Head of caudate nucleus (tissue), 42 donors: ENCODE measurements at regions of chr4 and their contacts with region 1.

Region 1: DNA sequence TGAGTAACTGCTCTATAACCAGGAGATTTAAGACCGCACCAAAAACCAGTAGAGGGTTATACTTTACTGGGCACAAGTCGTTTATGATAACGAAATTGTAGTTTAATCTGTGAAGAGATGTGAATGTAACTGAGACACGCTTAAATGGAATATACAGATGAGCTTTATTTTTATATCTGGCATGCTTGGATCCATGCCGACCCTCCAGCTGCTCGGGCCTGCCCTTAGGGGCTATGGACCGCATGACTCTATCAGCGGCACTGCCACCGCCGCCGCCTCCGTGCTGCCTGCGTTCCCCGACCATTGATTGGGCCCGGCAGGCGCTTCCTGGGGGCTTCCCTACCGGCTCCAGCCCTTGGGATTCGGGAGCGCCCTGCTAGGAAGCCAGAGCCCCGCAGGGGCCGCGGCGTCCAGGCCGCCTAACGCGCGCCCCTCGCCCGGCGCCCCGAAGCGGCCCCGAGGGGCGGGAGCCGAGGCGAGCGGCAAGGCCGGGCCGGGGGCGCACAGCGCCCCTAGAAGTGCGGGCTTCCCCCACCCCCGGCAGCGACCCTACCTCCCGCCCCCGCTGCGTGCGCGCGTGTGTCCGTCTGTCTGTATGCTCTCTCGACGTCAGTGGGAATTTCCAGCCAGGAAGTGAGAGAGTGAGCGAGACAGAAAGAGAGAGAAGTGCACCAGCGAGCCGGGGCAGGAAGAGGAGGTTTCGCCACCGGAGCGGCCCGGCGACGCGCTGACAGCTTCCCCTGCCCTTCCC is at the start of gene NFKB1:
- DNase-seq: peak; percentile 26 to 82 (median 64)

Region 2: GRCh38 chr4:102610007-102610406 is 109.1 kb after region 1 on chr4:
- intact Hi-C with region 1: loop called (anchors 10 kb)
- DNase-seq: peak in 1 of 42 donors; percentile 29

Region 3: GRCh38 chr4:102640669-102641068 is 139.8 kb after region 1 on chr4:
- intact Hi-C with region 1: no loop called
- DNase-seq: no peak